ENCODE measurements at regions of chr6 and their contacts with region 1.

Region 1: DNA sequence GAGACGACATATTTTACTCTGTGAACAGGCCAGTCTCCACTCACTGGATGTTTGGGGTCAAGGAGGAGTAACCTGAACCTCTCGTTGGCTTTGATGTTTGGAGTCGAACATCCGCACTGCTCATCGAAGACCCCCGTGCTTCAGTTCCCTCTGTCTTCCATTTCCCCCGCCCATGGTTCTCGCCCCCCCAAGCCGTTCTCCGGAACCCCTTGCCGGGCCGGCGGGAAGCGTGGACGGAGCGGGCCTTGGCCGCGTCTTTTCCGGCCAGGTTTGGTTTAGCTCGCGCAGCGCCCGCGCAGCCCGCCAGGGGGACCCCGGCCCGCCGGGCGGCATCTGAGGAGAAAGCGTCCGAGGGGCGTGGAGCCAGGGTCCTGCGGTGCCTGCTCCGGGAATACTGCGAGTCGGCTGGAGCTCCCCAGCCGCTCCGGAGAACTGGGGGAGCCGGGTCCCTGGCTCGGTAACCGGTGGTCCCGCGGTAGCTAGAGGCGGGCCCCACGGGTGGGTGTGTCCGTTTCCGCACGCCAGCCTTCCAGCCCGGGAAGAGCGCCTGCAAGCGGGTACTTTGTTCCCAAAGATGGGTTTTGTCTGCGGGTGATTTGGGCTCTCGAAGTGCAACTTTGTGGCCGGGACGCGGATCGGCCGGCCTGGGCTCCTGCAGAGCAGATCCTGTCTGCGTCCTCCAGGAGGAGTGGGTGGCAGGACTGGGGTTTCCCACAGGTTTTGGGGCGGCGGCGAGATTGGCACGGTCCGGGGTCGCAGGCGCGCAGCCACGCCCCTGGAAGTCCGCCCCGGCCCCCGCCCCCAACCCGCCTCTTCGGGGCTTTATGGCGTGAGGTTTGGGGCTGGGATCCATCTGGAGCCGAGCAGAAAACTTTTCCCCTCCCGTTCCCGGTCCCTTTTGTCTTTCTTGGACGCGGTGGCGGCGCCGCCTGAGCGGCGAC is at the start of gene TMEM200A:
- DNase-seq: no peak
- H3K4me3 ChIP-seq: peak within 1 kb of the TSS; percentile 55 to 65
- H3K27ac ChIP-seq: peak within 1 kb of the TSS; percentile 78
- H3K4me1 ChIP-seq: peaks cover 15% of the 10 kb centered on the region
- H3K27me3 ChIP-seq: no peaks in the 10 kb centered on the region
- CTCF ChIP-seq: peak; percentile 8 to 65 (median 53)
- POLR2A ChIP-seq: peak in 1 of 2 donors; percentile 5
- total RNA-seq, gene TMEM200A: 3.9 TPM

Region 2: DNA sequence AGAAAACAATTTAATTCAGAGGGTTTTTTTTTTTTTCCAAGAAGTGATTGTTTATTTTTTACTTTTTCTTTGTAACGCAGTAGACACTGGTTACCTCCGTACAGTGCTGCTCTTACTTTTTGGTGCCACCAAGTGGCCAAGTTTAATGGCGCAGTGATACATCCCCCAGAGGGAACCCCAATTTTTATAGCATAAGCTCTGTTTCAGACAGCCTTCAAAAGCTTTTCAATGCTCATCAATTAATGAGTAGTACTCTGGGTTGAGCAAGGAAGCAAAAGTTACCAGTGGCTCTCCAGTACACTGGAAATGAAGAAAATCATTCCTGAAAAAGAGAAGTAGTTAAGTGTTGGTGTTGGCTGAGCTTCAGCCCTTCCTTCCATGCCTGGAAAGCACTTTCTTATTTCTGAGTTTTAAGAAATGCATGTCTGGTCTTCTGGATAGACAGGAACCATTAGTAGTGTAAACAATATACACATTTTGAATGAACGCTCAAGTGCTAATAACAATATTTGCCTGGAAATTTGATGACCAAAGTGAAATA is 332.6 kb after region 1 on chr6:
- intact Hi-C with region 1: loop called (anchors 10 kb)
- DNase-seq: no peak
- H3K4me3 ChIP-seq: no peak overlapping the region
- H3K27ac ChIP-seq: no peak overlapping the region
- H3K4me1 ChIP-seq: no peaks in the 10 kb centered on the region
- H3K27me3 ChIP-seq: no peaks in the 10 kb centered on the region
- CTCF ChIP-seq: peak; percentile 32 to 60 (median 49)
- POLR2A ChIP-seq: no peak